Activated CD8-positive, alpha-beta T cell treated with anti-CD3 and anti-CD28 coated beads, Interleukin-2, amount 10 ng/mL, durations not matched to agents 7 days and 5 days (primary cell): ENCODE measurements at regions of chr6 and their contacts with region 1.

Region 1: DNA sequence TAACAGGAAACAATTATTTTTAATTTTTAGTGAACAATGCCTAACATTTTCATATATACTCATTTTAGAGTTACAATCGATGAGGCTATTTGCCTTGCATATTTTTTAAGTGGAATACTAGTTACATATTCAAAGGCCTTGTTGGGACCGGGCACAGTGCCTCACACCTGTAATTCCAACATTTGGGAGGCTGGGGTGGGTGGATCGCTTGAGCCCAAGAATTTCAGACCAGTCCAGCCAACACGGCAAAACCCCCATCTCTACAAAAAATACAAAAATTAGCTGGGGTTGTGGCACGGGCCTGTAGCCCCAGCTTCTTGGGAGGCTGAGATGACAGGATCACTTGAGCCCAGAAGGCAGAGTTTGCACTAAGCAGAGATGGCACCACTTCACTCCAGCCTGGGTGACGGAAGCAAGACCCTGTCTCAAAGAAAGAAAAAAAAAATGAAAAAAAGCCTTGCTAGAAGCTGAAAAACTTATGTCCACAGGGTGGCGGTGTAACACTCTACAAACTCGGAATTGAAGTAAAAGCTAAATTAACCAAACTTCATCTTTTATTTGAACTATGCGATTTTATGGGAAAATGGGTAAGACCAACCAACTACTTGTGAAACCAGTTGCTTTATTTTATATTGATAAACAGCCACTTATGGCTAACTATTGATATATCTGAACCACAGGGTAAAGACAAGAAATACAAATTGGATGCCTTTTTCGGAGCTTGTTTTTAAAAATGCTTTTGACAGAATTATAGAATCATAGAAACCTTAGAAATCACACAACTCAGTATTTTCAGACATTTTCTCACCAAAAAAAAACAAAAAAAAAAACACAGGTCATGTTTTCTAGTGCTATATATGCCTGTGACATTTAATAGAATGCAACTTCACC is 24.1 kb upstream of the ROS1 start:
- DNase-seq: peak; percentile 73
- ATAC-seq: no peak
- H3K4me3 Mint-ChIP-seq: no peak overlapping the region
- H3K27ac Mint-ChIP-seq: no peak overlapping the region
- H3K4me1 Mint-ChIP-seq: peaks cover 1% of the 10 kb centered on the region
- H3K27me3 Mint-ChIP-seq: peaks cover 33% of the 10 kb centered on the region

Region 2: GRCh38 chr6:117463762-117464665 is 14.2 kb after region 1 on chr6:
- CTCF ChIA-PET with region 1: interaction called, 13 read pairs
- POLR2A ChIA-PET with region 1: no interaction called
- DNase-seq: no peak
- ATAC-seq: peak; percentile 60
- H3K4me3 Mint-ChIP-seq: no peak overlapping the region
- H3K27ac Mint-ChIP-seq: no peak overlapping the region
- H3K4me1 Mint-ChIP-seq: peaks cover 27% of the 10 kb centered on the region
- H3K27me3 Mint-ChIP-seq: peaks cover 20% of the 10 kb centered on the region

Region 3: GRCh38 chr6:117482240-117483003 is 32.6 kb after region 1 on chr6 and contains the start of gene DCBLD1:
- CTCF ChIA-PET with region 1: interaction called, 21 read pairs
- POLR2A ChIA-PET with region 1: no interaction called
- DNase-seq: peak; percentile 66
- ATAC-seq: peak; percentile 87
- H3K4me3 Mint-ChIP-seq: peak within 1 kb of the TSS; percentile 85
- H3K27ac Mint-ChIP-seq: peak within 1 kb of the TSS; percentile 48
- H3K4me1 Mint-ChIP-seq: peaks cover 18% of the 10 kb centered on the region
- H3K27me3 Mint-ChIP-seq: peaks cover 47% of the 10 kb centered on the region
- total RNA-seq, gene DCBLD1: 2.5 to 4.3 TPM

Region 4: DNA sequence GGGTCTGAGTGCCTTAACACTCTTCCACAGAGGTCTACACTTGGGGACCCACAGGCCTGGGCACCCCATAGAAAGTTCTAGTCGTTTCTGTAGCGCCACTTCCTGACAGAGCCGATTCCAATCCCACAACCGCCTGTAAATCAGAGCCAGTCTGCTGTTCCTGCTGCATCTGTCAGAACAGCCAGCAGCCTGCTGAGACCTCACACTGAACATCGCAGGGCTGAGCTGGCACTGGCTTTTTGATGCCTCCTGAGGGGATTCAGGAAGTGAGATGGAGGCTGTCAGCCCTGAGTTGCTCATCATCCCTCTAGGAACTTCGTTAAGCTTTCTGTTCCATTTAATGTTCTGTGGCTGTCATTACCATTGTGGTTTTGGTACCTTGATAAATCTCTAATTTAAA is 81.6 kb after region 1 on chr6:
- CTCF ChIA-PET with region 1: interaction called, 10 read pairs
- POLR2A ChIA-PET with region 1: no interaction called
- DNase-seq: no peak
- ATAC-seq: no peak
- H3K4me3 Mint-ChIP-seq: no peak overlapping the region
- H3K27ac Mint-ChIP-seq: no peak overlapping the region
- H3K4me1 Mint-ChIP-seq: peaks cover 2% of the 10 kb centered on the region
- H3K27me3 Mint-ChIP-seq: no peaks in the 10 kb centered on the region

Region 5: GRCh38 chr6:117555882-117556498 is 106.2 kb after region 1 on chr6:
- CTCF ChIA-PET with region 1: interaction called, 153 read pairs
- POLR2A ChIA-PET with region 1: no interaction called
- DNase-seq: peak; percentile 71
- ATAC-seq: peak; percentile 51
- H3K4me3 Mint-ChIP-seq: no peak overlapping the region
- H3K27ac Mint-ChIP-seq: no peak overlapping the region
- H3K4me1 Mint-ChIP-seq: peaks cover 1% of the 10 kb centered on the region
- H3K27me3 Mint-ChIP-seq: peaks cover 5% of the 10 kb centered on the region